ENCODE measurements at regions of chr19 and their contacts with region 1.

Region 1: GRCh38 chr19:2887391-2887914 is 13.3 kb upstream of the ZNF57 start:
- DNase-seq: peak; percentile 27
- H3K4me3 ChIP-seq: no peak overlapping the region
- H3K27ac ChIP-seq: no peak overlapping the region
- H3K27me3 ChIP-seq: no peaks in the 10 kb centered on the region
- CTCF ChIP-seq: peak; percentile 75

Region 2: GRCh38 chr19:2168619-2169424 is 718.6 kb before region 1 on chr19:
- CTCF ChIA-PET with region 1: no interaction called
- POLR2A ChIA-PET with region 1: no interaction called
- DNase-seq: peak; percentile 93
- H3K4me3 ChIP-seq: peak overlapping the region; percentile 21
- H3K27ac ChIP-seq: peak overlapping the region; percentile 90
- H3K27me3 ChIP-seq: no peaks in the 10 kb centered on the region
- CTCF ChIP-seq: no peak

Region 3: DNA sequence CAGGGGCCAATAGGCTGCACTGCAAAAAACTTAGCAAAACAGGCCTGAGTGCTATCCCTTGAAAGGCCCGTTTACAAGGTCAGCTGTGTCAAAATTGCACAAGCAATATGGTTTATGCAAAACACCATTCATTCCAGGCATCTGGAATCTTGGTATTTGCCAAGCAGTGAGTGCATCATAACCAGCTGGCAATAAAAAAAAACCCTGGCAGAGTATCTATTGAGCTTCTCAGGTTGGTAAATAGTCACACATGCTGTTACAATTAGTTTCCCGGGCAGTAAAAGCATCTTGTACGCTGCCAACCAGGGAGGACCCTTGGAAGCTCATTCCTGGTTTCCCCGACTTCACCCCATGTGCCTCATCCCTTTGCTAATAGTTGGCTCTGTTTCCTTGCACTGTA is 36.1 kb after region 1 on chr19:
- CTCF ChIA-PET with region 1: interaction called, 12 read pairs
- POLR2A ChIA-PET with region 1: interaction called, 5 read pairs
- DNase-seq: no peak
- H3K4me3 ChIP-seq: no peak overlapping the region
- H3K27ac ChIP-seq: no peak overlapping the region
- H3K27me3 ChIP-seq: no peaks in the 10 kb centered on the region
- CTCF ChIP-seq: no peak